PC-3 (cell line): ENCODE measurements at regions of chr13 and their contacts with region 1.

Region 1: DNA sequence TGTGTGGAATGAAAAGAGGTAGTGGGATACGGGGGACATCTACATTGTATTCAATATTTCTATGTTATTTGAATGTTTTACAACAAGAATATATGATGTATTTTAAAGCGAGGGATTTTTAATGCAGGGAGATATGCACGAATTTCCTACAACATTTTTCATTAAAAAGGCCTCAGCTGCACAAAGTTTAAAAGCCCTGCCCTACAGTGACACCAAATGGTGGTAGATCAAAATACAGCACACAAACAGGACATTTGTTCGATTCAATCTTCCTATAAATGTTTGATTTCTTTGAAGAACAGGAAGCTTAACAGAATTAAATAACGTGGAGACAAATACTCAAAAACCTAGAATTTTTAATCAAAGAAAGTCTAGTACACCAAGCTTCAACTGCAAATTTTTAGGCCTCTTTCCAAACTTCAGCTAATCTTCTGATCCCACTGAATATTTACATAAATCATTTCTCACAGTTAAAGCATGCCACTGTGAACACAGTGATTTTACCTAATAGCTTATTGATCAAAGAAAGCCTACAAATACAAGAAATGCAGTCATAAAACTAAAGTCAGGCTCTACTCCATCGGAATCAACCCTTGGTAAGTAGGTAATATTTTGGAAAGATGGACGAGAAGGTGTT is 257.2 kb downstream of the DIAPH3 start:
- DNase-seq: peak; percentile 41
- ATAC-seq: peak; percentile 49; the same call in 1 of the 2 replicates
- H3K4me3 ChIP-seq: no peak overlapping the region
- H3K27ac ChIP-seq: no peak overlapping the region
- H3K4me1 ChIP-seq: no peaks in the 10 kb centered on the region
- H3K27me3 ChIP-seq: no peaks in the 10 kb centered on the region
- CTCF ChIP-seq: peak; percentile 72

Region 2: GRCh38 chr13:59391696-59392095 is 514.8 kb before region 1 on chr13:
- CTCF ChIA-PET with region 1: no interaction called
- POLR2A ChIA-PET with region 1: no interaction called
- intact Hi-C with region 1: loop called (anchors 5 kb)
- DNase-seq: peak; percentile 62
- ATAC-seq: peak; percentile 74
- H3K4me3 ChIP-seq: no peak overlapping the region
- H3K27ac ChIP-seq: no peak overlapping the region
- H3K4me1 ChIP-seq: no peaks in the 10 kb centered on the region
- H3K27me3 ChIP-seq: no peaks in the 10 kb centered on the region
- CTCF ChIP-seq: peak; percentile 77

Region 3: GRCh38 chr13:60335531-60335930 is 429.0 kb after region 1 on chr13:
- CTCF ChIA-PET with region 1: no interaction called
- POLR2A ChIA-PET with region 1: no interaction called
- intact Hi-C with region 1: loop called (anchors 10 kb)
- DNase-seq: peak; percentile 16
- ATAC-seq: no peak
- H3K4me3 ChIP-seq: no peak overlapping the region
- H3K27ac ChIP-seq: no peak overlapping the region
- H3K4me1 ChIP-seq: no peaks in the 10 kb centered on the region
- H3K27me3 ChIP-seq: peaks cover 25% of the 10 kb centered on the region; the same call in 1 of the 2 replicates
- CTCF ChIP-seq: peak; percentile 60